Transverse colon (tissue), 4 donors: ENCODE measurements at regions of chr19 and their contacts with region 1.

Region 1: GRCh38 chr19:42132851-42133528 is 744 bp upstream of the POU2F2 start:
- DNase-seq: peak; percentile 79
- H3K4me3 ChIP-seq: peak overlapping the region in 2 of 4 donors; percentile 17 to 31
- H3K27ac ChIP-seq: peak overlapping the region in 3 of 4 donors; percentile 24 to 32 (median 27)
- H3K4me1 ChIP-seq: peaks cover 0 to 18% (median 14%) of the 10 kb centered on the region in 4 donors
- H3K27me3 ChIP-seq: peaks cover 20% of the 10 kb centered on the region
- CTCF ChIP-seq: peak; percentile 90 to 99 (median 98)
- EP300 ChIP-seq: no peak
- POLR2A ChIP-seq: peak; percentile 9

Region 2: GRCh38 chr19:42184401-42184861 is 51.4 kb after region 1 on chr19:
- in situ Hi-C with region 1: loop called in 1 of 4 experiments (anchors 10 kb)
- intact Hi-C with region 1: loop called (anchors 2 kb)
- DNase-seq: peak; percentile 80
- H3K4me3 ChIP-seq: no peak overlapping the region
- H3K27ac ChIP-seq: no peak overlapping the region
- H3K4me1 ChIP-seq: peaks cover 0 to 21% (median 3%) of the 10 kb centered on the region in 4 donors
- H3K27me3 ChIP-seq: peaks cover 32% of the 10 kb centered on the region
- CTCF ChIP-seq: peak; percentile 87 to 91 (median 88)
- EP300 ChIP-seq: no peak
- POLR2A ChIP-seq: no peak

Region 3: GRCh38 chr19:42295831-42296525 is 163.0 kb after region 1 on chr19:
- in situ Hi-C with region 1: loop called in 2 of 4 experiments (anchors 10 kb)
- intact Hi-C with region 1: no loop called
- DNase-seq: peak; percentile 89
- H3K4me3 ChIP-seq: no peak overlapping the region
- H3K27ac ChIP-seq: peak overlapping the region in 1 of 4 donors; percentile 26
- H3K4me1 ChIP-seq: peaks cover 0 to 15% (median 9%) of the 10 kb centered on the region in 4 donors
- H3K27me3 ChIP-seq: no peaks in the 10 kb centered on the region
- CTCF ChIP-seq: peak; percentile 93 to 97 (median 95)
- EP300 ChIP-seq: no peak
- POLR2A ChIP-seq: no peak

Region 4: DNA sequence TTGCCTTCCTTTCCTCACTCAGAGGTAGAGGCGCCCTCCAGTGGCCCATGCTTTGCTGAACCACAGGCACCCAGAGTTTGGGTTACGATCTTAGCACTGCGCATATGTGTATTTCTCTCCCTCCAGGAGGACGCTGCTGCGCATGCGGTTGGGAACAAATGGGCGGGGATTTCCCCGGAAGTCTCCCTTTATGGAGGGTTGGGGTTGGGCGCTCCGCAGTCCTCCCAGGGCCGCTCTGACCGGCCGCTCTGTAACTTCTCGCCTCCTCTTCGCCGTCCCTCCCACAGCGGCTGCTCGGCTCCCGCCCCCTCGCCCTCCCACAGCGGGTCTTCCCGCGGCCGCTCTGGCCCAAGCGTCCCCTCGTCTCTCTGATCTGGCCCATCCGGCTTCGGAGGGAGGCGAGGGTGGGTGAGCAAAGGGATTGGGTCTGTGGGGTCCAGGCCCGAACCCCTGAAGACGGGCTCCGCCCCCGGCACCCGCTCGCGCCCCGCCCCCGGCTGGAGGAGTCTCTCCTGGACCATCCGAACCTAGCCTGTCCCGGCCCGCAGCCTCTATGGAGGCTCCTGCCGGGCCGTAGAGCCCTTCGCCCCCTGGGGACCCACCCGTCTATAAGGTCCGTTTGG is 192.4 kb after region 1 on chr19 and contains the start of gene MEGF8:
- in situ Hi-C with region 1: loop called in 1 of 4 experiments (anchors 10 kb)
- intact Hi-C with region 1: loop called (anchors 10 kb)
- DNase-seq: peak; percentile 99
- H3K4me3 ChIP-seq: peak within 1 kb of the TSS; percentile 49 to 96 (median 86)
- H3K27ac ChIP-seq: peak within 1 kb of the TSS; percentile 73 to 88 (median 86)
- H3K4me1 ChIP-seq: peaks cover 23 to 39% (median 27%) of the 10 kb centered on the region in 4 donors
- H3K27me3 ChIP-seq: peaks cover 36% of the 10 kb centered on the region
- CTCF ChIP-seq: peak; percentile 77 to 95 (median 86)
- EP300 ChIP-seq: no peak
- POLR2A ChIP-seq: peak; percentile 81
- total RNA-seq, gene MEGF8: 15.3 to 40.4 (median 22.8) TPM